ENCODE measurements at regions of chr11 and their contacts with region 1.

Region 1: GRCh38 chr11:32045456-32045855 is 45.4 kb upstream of the RCN1 start:
- DNase-seq: no peak
- H3K4me3 ChIP-seq: no peak overlapping the region
- H3K27ac ChIP-seq: no peak overlapping the region
- H3K4me1 ChIP-seq: peaks cover 16% of the 10 kb centered on the region
- H3K27me3 ChIP-seq: peaks cover 58% of the 10 kb centered on the region
- CTCF ChIP-seq: no peak

Region 2: GRCh38 chr11:32255841-32256240 is 210.4 kb after region 1 on chr11:
- CTCF ChIA-PET with region 1: interaction called, 13 read pairs
- POLR2A ChIA-PET with region 1: no interaction called
- intact Hi-C with region 1: no loop called
- DNase-seq: no peak
- H3K4me3 ChIP-seq: no peak overlapping the region
- H3K27ac ChIP-seq: no peak overlapping the region
- H3K4me1 ChIP-seq: peaks cover 7% of the 10 kb centered on the region
- H3K27me3 ChIP-seq: peaks cover 36% of the 10 kb centered on the region
- CTCF ChIP-seq: no peak

Measured in A673 (cell line).